ENCODE measurements at regions of chr16 and their contacts with region 1.

Region 1: GRCh38 chr16:54538266-54538665 is 251.7 kb upstream of the IRX3 start:
- DNase-seq: peak in 1 of 2 experiments; percentile 31
- H3K4me3 ChIP-seq: no peak overlapping the region
- H3K4me3 Mint-ChIP-seq: no peak overlapping the region
- H3K27ac Mint-ChIP-seq: no peak overlapping the region
- H3K4me1 ChIP-seq: peaks cover 23% of the 10 kb centered on the region
- H3K4me1 Mint-ChIP-seq: peaks cover 8% of the 10 kb centered on the region
- H3K27me3 ChIP-seq: no peaks in the 10 kb centered on the region
- H3K27me3 Mint-ChIP-seq: no peaks in the 10 kb centered on the region
- CTCF ChIP-seq: peak; percentile 41 to 61

Region 2: GRCh38 chr16:54812229-54812628 is 274.0 kb after region 1 on chr16:
- CTCF ChIA-PET with region 1: no interaction called
- POLR2A ChIA-PET with region 1: no interaction called
- intact Hi-C with region 1: loop called (anchors 1 kb)
- DNase-seq: no peak
- H3K4me3 ChIP-seq: no peak overlapping the region
- H3K4me3 Mint-ChIP-seq: no peak overlapping the region
- H3K27ac Mint-ChIP-seq: no peak overlapping the region
- H3K4me1 ChIP-seq: peaks cover 11% of the 10 kb centered on the region; the same call in 1 of the 2 replicates
- H3K4me1 Mint-ChIP-seq: peaks cover 9% of the 10 kb centered on the region
- H3K27me3 ChIP-seq: no peaks in the 10 kb centered on the region
- H3K27me3 Mint-ChIP-seq: no peaks in the 10 kb centered on the region
- CTCF ChIP-seq: peak; percentile 50